HepG2 (cell line): ENCODE measurements at regions of chr1 and their contacts with region 1.

Region 1: GRCh38 chr1:48223366-48224240 is 1.1 kb downstream of the SLC5A9 start:
- DNase-seq: peak; percentile 52
- ATAC-seq: peak; percentile 13
- H3K4me3 ChIP-seq: peak overlapping the region; percentile 52 to 79 (median 61)
- H3K27ac ChIP-seq: peak overlapping the region; percentile 94
- H3K4me1 ChIP-seq: peaks cover 67% of the 10 kb centered on the region
- H3K27me3 ChIP-seq: no peaks in the 10 kb centered on the region
- CTCF ChIP-seq: no peak
- EP300 ChIP-seq: no peak
- POLR2A ChIP-seq: no peak
- RAD21 ChIP-seq: no peak

Region 2: DNA sequence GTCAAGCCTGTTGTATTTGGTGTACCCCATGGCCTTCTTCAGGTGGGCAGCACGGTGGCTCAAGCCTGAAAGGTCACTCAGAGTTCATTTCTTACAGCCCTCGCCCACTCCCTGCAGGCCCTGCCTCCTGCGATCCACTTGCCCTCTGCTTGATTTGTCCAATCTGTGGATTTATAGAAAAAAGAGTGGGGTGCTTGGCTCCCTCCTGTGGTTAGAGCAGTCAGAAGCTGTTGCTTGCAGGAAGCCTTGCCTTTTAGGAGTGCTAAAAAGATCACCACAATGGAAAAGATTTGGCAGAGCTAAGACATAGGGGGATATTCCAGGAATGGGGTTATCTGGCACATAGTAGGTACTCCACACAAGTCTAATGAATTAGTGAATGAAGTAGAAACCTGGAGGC is 118.4 kb before region 1 on chr1:
- CTCF ChIA-PET with region 1: no interaction called
- POLR2A ChIA-PET with region 1: no interaction called
- in situ Hi-C with region 1: no loop called
- intact Hi-C with region 1: no loop called
- DNase-seq: no peak
- ATAC-seq: no peak
- H3K4me3 ChIP-seq: no peak overlapping the region
- H3K27ac ChIP-seq: no peak overlapping the region
- H3K4me1 ChIP-seq: no peaks in the 10 kb centered on the region
- H3K27me3 ChIP-seq: no peaks in the 10 kb centered on the region
- CTCF ChIP-seq: no peak
- EP300 ChIP-seq: no peak
- POLR2A ChIP-seq: no peak
- RAD21 ChIP-seq: no peak

Region 3: DNA sequence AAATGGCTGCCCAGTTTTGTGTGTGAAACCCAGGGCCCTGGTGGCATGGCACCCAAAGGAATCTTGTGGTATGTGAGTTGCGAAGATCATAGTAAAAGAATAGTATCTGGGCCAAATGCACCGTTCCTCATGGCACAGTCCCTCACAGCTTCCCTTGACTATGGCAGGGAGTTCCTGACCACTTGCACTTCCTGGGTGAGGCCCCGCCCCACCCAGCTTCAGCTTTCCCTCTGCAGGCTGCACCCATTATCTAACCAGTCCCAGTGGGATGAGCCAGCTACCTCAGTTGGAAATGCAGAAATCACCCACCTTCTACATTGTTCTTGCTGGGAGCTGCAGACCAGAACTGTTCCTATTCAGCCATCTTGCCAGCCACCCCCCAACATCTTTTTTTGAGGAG is 61.9 kb after region 1 on chr1:
- CTCF ChIA-PET with region 1: no interaction called
- POLR2A ChIA-PET with region 1: interaction called, 13 read pairs
- in situ Hi-C with region 1: no loop called
- intact Hi-C with region 1: no loop called
- DNase-seq: peak; percentile 12
- ATAC-seq: peak; percentile 91
- H3K4me3 ChIP-seq: peak overlapping the region in 1 of 3 experiments; percentile 59; a peak in 1 of 6 replicates
- H3K27ac ChIP-seq: no peak overlapping the region
- H3K4me1 ChIP-seq: peaks cover 15% of the 10 kb centered on the region
- H3K27me3 ChIP-seq: no peaks in the 10 kb centered on the region
- CTCF ChIP-seq: no peak
- EP300 ChIP-seq: no peak
- POLR2A ChIP-seq: no peak
- RAD21 ChIP-seq: no peak

Region 4: GRCh38 chr1:48471691-48472576 is 248.3 kb after region 1 on chr1 and contains the start of gene SPATA6:
- CTCF ChIA-PET with region 1: no interaction called
- POLR2A ChIA-PET with region 1: interaction called, 12 read pairs
- in situ Hi-C with region 1: no loop called
- intact Hi-C with region 1: no loop called
- DNase-seq: peak; percentile 83
- ATAC-seq: peak; percentile 96
- H3K4me3 ChIP-seq: peak within 1 kb of the TSS; percentile 66 to 77 (median 75)
- H3K27ac ChIP-seq: no peak within 1 kb of the TSS
- H3K4me1 ChIP-seq: peaks cover 22% of the 10 kb centered on the region
- H3K27me3 ChIP-seq: no peaks in the 10 kb centered on the region; a peak in 1 of 5 replicates
- CTCF ChIP-seq: 0 out of 2 replicates have a peak, but pooled peaks have one; percentile 21
- EP300 ChIP-seq: no peak
- POLR2A ChIP-seq: peak; percentile 44 to 60; a peak in 3 of 4 replicates
- RAD21 ChIP-seq: no peak
- total RNA-seq, gene SPATA6: 1.8 and 3.3 TPM in 2 replicates